BJ (cell line): ENCODE measurements at regions of chr19 and their contacts with region 1.

Region 1: GRCh38 chr19:14081325-14082093 is 4.1 kb downstream of the C19orf67 start:
- DNase-seq: peak; percentile 99
- H3K4me3 ChIP-seq: peak overlapping the region; percentile 73
- H3K27me3 ChIP-seq: no peaks in the 10 kb centered on the region
- CTCF ChIP-seq: no peak

Region 2: GRCh38 chr19:13880059-13881043 is 201.2 kb before region 1 on chr19:
- CTCF ChIA-PET with region 1: interaction called, 31 read pairs
- POLR2A ChIA-PET with region 1: no interaction called
- DNase-seq: peak; percentile 73
- H3K4me3 ChIP-seq: no peak overlapping the region
- H3K27me3 ChIP-seq: no peaks in the 10 kb centered on the region
- CTCF ChIP-seq: peak; percentile 99

Region 3: DNA sequence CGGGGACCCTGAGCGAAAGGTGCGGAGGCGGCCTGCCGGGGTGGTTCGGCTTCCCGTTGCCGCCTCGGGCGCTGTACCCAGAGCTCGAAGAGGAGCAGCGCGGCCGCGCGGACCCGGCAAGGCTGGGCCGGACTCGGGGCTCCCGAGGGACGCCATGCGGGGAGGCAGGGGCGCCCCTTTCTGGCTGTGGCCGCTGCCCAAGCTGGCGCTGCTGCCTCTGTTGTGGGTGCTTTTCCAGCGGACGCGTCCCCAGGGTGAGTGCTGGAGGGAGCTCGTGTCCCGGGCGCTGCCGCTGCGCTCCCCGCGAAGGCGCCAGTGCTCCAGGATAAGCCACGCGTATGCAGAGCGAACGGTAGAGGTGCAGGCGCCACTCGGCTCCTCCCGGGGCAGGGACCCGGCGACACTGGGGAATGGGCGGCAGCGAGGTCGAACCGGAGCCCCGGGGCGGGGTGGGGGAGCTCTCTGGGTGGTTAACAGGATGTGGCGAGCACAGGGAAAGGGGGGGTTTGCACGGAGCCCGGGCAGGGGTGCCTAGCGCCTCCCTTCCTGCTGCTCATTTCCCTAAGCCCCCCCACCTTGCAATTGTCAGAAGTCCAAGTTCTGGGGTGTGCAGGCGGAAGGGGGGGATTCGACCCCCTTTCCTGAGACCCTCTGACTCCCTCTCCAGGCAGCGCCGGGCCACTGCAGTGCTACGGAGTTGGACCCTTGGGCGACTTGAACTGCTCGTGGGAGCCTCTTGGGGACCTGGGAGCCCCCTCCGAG is 49.6 kb before region 1 on chr19 and contains the start of gene IL27RA:
- CTCF ChIA-PET with region 1: interaction called, 11 read pairs
- POLR2A ChIA-PET with region 1: no interaction called
- DNase-seq: no peak
- H3K4me3 ChIP-seq: peak within 1 kb of the TSS; percentile 61
- H3K27me3 ChIP-seq: peaks cover 6% of the 10 kb centered on the region
- CTCF ChIP-seq: peak; percentile 87
- polyA plus RNA-seq, gene IL27RA: 4.4 and 6.6 TPM in 2 replicates